HCT116 (cell line): ENCODE measurements at regions of chr15 and their contacts with region 1.

Region 1: DNA sequence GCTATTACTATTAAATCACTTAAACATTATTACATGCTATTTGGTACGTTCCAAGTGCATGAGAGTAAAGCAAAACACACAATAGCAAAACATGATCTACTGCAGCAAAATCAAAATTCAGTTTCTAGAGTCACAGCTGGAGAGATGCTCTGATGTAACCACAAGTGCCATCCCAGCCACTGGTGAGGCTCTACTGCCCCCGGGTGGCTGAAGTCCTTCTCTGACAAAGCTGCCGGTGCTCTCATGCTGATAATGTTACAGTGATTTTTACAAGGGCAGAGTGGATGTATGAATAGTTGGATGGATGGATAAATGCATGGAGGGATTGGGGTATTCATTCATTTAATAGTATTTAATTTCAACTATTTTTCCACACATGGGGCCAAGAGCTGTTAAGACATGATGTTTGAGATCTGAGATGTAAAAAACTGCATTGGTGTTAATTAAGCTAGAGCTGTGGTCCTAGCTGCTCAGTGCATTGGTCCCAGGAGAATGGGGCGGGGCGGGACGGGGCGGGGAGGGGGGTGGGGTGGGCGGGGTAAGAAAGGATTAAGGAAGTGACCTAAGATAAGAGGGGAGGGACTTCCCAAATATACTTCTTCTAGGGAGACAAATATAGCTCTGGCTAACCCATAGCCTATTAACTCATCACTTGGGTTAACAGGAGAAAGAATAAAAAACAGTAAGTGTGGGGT is 5.3 kb upstream of the SPESP1 start:
- DNase-seq: peak; percentile 66
- ATAC-seq: peak; percentile 96
- H3K4me3 ChIP-seq: peak overlapping the region; percentile 16 to 19; a peak in 1 of 4 replicates
- H3K27ac ChIP-seq: no peak overlapping the region
- H3K4me1 ChIP-seq: peaks cover 3 to 4% of the 10 kb centered on the region in 2 experiments; a peak in 1 of 4 replicates
- H3K27me3 ChIP-seq: no peaks in the 10 kb centered on the region
- CTCF ChIP-seq: peak; percentile 80 to 96 (median 91)
- POLR2A ChIP-seq: no peak
- RAD21 ChIP-seq: peak; percentile 94

Region 2: GRCh38 chr15:68304589-68305337 is 620.2 kb before region 1 on chr15:
- CTCF ChIA-PET with region 1: interaction called, 22 read pairs
- POLR2A ChIA-PET with region 1: no interaction called
- RAD21 ChIA-PET with region 1: no interaction called
- intact Hi-C with region 1: no loop called
- DNase-seq: no peak
- ATAC-seq: no peak
- H3K4me3 ChIP-seq: no peak overlapping the region
- H3K27ac ChIP-seq: no peak overlapping the region
- H3K4me1 ChIP-seq: peaks cover 0 to 33% of the 10 kb centered on the region in 2 experiments; a peak in 3 of 4 replicates
- H3K27me3 ChIP-seq: no peaks in the 10 kb centered on the region
- CTCF ChIP-seq: no peak
- POLR2A ChIP-seq: no peak
- RAD21 ChIP-seq: no peak

Region 3: GRCh38 chr15:68559345-68560310 is 365.4 kb before region 1 on chr15:
- CTCF ChIA-PET with region 1: interaction called, 28 read pairs
- POLR2A ChIA-PET with region 1: no interaction called
- RAD21 ChIA-PET with region 1: interaction called, 5 read pairs
- intact Hi-C with region 1: loop called (anchors 1 kb)
- DNase-seq: peak; percentile 56
- ATAC-seq: peak; percentile 97
- H3K4me3 ChIP-seq: peak overlapping the region; percentile 44 to 56
- H3K27ac ChIP-seq: no peak overlapping the region
- H3K4me1 ChIP-seq: peaks cover 0 to 15% of the 10 kb centered on the region in 2 experiments; a peak in 2 of 4 replicates
- H3K27me3 ChIP-seq: no peaks in the 10 kb centered on the region
- CTCF ChIP-seq: peak; percentile 85 to 92 (median 92)
- POLR2A ChIP-seq: no peak
- RAD21 ChIP-seq: peak; percentile 91

Region 4: GRCh38 chr15:68644077-68644904 is 280.7 kb before region 1 on chr15:
- CTCF ChIA-PET with region 1: no interaction called
- POLR2A ChIA-PET with region 1: no interaction called
- RAD21 ChIA-PET with region 1: no interaction called
- intact Hi-C with region 1: no loop called
- DNase-seq: peak; percentile 22
- ATAC-seq: no peak; the same call in 1 of the 2 replicates
- H3K4me3 ChIP-seq: no peak overlapping the region
- H3K27ac ChIP-seq: no peak overlapping the region
- H3K4me1 ChIP-seq: peaks cover 5 to 49% of the 10 kb centered on the region in 2 experiments; a peak in 3 of 4 replicates
- H3K27me3 ChIP-seq: no peaks in the 10 kb centered on the region
- CTCF ChIP-seq: peak in 1 of 3 experiments; percentile 22; a peak in 2 of 6 replicates
- POLR2A ChIP-seq: no peak
- RAD21 ChIP-seq: peak; percentile 47; the same call in 1 of the 2 replicates

Region 5: GRCh38 chr15:68730471-68730919 is 194.5 kb before region 1 on chr15:
- CTCF ChIA-PET with region 1: interaction called, 18 read pairs
- POLR2A ChIA-PET with region 1: no interaction called
- RAD21 ChIA-PET with region 1: no interaction called
- intact Hi-C with region 1: loop called (anchors 1 kb)
- DNase-seq: peak; percentile 52
- ATAC-seq: peak; percentile 89
- H3K4me3 ChIP-seq: no peak overlapping the region
- H3K27ac ChIP-seq: no peak overlapping the region
- H3K4me1 ChIP-seq: no peaks in the 10 kb centered on the region; a peak in 1 of 4 replicates
- H3K27me3 ChIP-seq: no peaks in the 10 kb centered on the region
- CTCF ChIP-seq: peak; percentile 55 to 69 (median 57); a peak in 5 of 6 replicates
- POLR2A ChIP-seq: no peak
- RAD21 ChIP-seq: peak; percentile 78

Region 6: GRCh38 chr15:68875377-68876116 is 49.5 kb before region 1 on chr15:
- CTCF ChIA-PET with region 1: interaction called, 43 read pairs
- POLR2A ChIA-PET with region 1: interaction called, 3 read pairs
- RAD21 ChIA-PET with region 1: interaction called, 11 to 12 read pairs
- intact Hi-C with region 1: no loop called
- DNase-seq: peak; percentile 88
- ATAC-seq: peak; percentile 89
- H3K4me3 ChIP-seq: peak overlapping the region; percentile 26 to 48
- H3K27ac ChIP-seq: no peak overlapping the region
- H3K4me1 ChIP-seq: peaks cover 0 to 9% of the 10 kb centered on the region in 2 experiments; a peak in 1 of 4 replicates
- H3K27me3 ChIP-seq: no peaks in the 10 kb centered on the region
- CTCF ChIP-seq: peak; percentile 83 to 88 (median 87)
- POLR2A ChIP-seq: no peak
- RAD21 ChIP-seq: peak; percentile 95

Region 7: DNA sequence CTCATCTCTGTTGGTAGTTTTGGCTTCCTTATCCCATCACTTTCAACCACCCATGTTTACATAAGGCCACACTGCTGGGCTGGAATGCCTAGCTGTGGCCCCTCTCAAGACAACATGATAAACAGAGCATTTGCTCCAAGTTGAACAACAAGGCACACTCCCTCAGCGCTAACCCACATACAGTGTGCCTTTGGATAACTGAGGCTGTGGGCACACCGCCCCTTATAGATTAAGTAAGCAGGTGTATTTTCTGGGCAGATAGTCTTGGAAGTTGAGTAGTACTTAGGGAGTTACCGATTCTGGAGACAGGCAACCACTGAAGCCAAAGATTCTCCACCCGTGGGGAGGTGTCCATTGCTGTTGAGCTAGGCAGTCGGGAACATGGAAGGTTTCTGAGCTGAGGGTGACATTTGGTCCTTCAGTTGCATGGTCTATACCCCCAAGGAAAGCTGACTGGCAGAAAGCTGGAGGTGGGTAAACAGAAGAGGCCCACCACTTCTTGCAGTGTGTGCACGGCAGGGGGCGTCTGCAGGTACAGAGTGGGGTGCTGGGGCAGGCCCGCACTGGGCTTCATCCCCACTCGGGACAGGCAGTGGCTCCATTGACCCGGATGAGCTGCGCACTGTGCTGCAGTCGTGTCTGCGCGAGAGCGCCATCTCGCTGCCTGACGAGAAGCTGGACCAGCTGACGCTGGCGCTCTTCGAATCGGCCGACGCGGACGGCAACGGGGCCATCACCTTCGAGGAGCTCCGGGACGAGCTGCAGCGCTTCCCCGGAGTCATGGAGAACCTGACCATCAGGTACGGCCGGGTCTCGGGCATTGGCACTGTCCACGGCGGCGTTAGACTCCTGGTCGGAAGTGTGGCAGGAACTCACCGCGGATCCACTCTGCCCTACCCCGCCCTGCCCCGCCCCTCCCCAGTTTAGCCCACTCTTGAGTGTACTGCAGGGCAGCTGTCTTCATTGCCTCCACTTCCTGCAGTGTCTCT is 106.3 kb after region 1 on chr15:
- CTCF ChIA-PET with region 1: interaction called, 13 read pairs
- POLR2A ChIA-PET with region 1: no interaction called
- RAD21 ChIA-PET with region 1: interaction called in 1 of 2 experiments, 5 read pairs
- intact Hi-C with region 1: no loop called
- DNase-seq: peak; percentile 65
- ATAC-seq: peak; percentile 91
- H3K4me3 ChIP-seq: peak overlapping the region; percentile 44 to 59
- H3K27ac ChIP-seq: no peak overlapping the region
- H3K4me1 ChIP-seq: peaks cover 7 to 49% of the 10 kb centered on the region in 2 experiments; a peak in 3 of 4 replicates
- H3K27me3 ChIP-seq: no peaks in the 10 kb centered on the region
- CTCF ChIP-seq: peak; percentile 47 to 71 (median 71); a peak in 5 of 6 replicates
- POLR2A ChIP-seq: no peak
- RAD21 ChIP-seq: peak; percentile 61

Region 8: GRCh38 chr15:69346112-69346511 is 421.1 kb after region 1 on chr15:
- CTCF ChIA-PET with region 1: no interaction called
- POLR2A ChIA-PET with region 1: no interaction called
- RAD21 ChIA-PET with region 1: no interaction called
- intact Hi-C with region 1: no loop called
- DNase-seq: no peak
- ATAC-seq: no peak
- H3K4me3 ChIP-seq: no peak overlapping the region
- H3K27ac ChIP-seq: no peak overlapping the region
- H3K4me1 ChIP-seq: peaks cover 0 to 17% of the 10 kb centered on the region in 2 experiments; a peak in 1 of 4 replicates
- H3K27me3 ChIP-seq: no peaks in the 10 kb centered on the region
- CTCF ChIP-seq: no peak
- POLR2A ChIP-seq: no peak
- RAD21 ChIP-seq: no peak